PC-9 (cell line): ENCODE measurements at regions of chr12 and their contacts with region 1.

Region 1: GRCh38 chr12:96516472-96517430 is 27.4 kb downstream of the CFAP54 start:
- DNase-seq: peak; percentile 71 to 73
- H3K4me3 ChIP-seq: no peak overlapping the region
- H3K27ac ChIP-seq: 0 out of 2 replicates have a peak overlapping the region, but pooled peaks have one; percentile 13
- H3K4me1 ChIP-seq: peaks cover 5% of the 10 kb centered on the region; the same call in 1 of the 2 replicates
- H3K27me3 ChIP-seq: no peaks in the 10 kb centered on the region
- CTCF ChIP-seq: peak; percentile 89

Region 2: GRCh38 chr12:96061864-96062453 is 454.8 kb before region 1 on chr12:
- CTCF ChIA-PET with region 1: no interaction called
- POLR2A ChIA-PET with region 1: no interaction called
- intact Hi-C with region 1: loop called (anchors 1 kb)
- DNase-seq: peak; percentile 69 to 72
- H3K4me3 ChIP-seq: no peak overlapping the region
- H3K27ac ChIP-seq: 0 out of 2 replicates have a peak overlapping the region, but pooled peaks have one; percentile 14
- H3K4me1 ChIP-seq: peaks cover 9% of the 10 kb centered on the region; the same call in 1 of the 2 replicates
- H3K27me3 ChIP-seq: no peaks in the 10 kb centered on the region
- CTCF ChIP-seq: peak; percentile 89

Region 3: DNA sequence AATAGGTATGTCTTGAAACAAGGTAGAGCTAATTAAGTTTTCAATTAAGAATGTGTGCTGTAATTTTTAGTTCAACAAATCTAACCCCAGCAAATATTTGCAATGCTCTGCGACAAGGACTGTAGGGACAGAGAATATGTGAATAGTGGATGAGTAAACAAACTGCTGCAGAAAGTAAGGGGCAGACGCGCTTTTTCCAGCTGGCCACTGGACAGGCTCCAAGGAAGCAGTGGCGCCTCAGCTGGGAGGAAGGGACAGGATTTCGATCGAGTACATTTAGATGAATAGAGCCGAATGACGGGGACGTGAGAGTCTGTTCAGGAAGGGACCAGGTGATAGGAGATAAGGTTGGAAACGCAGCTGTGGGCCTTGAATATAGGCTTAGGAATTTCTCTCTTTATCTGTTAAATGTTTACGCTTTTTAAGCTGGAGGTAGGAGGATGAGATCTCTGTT is 253.3 kb before region 1 on chr12:
- CTCF ChIA-PET with region 1: interaction called, 3 read pairs
- POLR2A ChIA-PET with region 1: no interaction called
- intact Hi-C with region 1: loop called (anchors 5 kb)
- DNase-seq: no peak
- H3K4me3 ChIP-seq: no peak overlapping the region
- H3K27ac ChIP-seq: no peak overlapping the region
- H3K4me1 ChIP-seq: no peaks in the 10 kb centered on the region
- H3K27me3 ChIP-seq: no peaks in the 10 kb centered on the region
- CTCF ChIP-seq: no peak

Region 4: GRCh38 chr12:96294831-96295230 is 221.9 kb before region 1 on chr12:
- CTCF ChIA-PET with region 1: interaction called, 10 read pairs
- POLR2A ChIA-PET with region 1: no interaction called
- intact Hi-C with region 1: no loop called
- DNase-seq: no peak
- H3K4me3 ChIP-seq: no peak overlapping the region
- H3K27ac ChIP-seq: no peak overlapping the region
- H3K4me1 ChIP-seq: no peaks in the 10 kb centered on the region
- H3K27me3 ChIP-seq: no peaks in the 10 kb centered on the region
- CTCF ChIP-seq: no peak

Region 5: DNA sequence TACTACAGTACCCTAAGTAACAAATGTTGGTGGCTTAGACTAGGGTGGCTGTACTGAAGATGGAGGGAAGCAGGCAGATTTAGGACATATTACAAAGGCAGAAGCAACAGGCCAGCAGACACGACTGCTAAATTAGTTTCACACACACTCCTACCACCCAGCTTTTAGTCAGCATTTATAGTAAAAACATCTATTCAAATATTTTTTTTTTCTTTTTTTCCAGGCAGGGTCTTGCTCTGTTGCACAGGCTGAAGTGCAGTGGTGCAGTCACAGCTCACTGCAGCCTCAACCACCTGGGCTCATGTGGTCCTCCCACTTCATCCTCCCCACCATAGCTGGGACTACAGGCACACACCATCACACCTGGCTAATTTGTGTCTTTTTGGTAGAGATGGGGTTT is 189.4 kb before region 1 on chr12:
- CTCF ChIA-PET with region 1: no interaction called
- POLR2A ChIA-PET with region 1: no interaction called
- intact Hi-C with region 1: no loop called
- DNase-seq: no peak
- H3K4me3 ChIP-seq: no peak overlapping the region
- H3K27ac ChIP-seq: no peak overlapping the region
- H3K4me1 ChIP-seq: no peaks in the 10 kb centered on the region
- H3K27me3 ChIP-seq: no peaks in the 10 kb centered on the region
- CTCF ChIP-seq: no peak